ENCODE measurements at regions of chr6 and their contacts with region 1.

Region 1: DNA sequence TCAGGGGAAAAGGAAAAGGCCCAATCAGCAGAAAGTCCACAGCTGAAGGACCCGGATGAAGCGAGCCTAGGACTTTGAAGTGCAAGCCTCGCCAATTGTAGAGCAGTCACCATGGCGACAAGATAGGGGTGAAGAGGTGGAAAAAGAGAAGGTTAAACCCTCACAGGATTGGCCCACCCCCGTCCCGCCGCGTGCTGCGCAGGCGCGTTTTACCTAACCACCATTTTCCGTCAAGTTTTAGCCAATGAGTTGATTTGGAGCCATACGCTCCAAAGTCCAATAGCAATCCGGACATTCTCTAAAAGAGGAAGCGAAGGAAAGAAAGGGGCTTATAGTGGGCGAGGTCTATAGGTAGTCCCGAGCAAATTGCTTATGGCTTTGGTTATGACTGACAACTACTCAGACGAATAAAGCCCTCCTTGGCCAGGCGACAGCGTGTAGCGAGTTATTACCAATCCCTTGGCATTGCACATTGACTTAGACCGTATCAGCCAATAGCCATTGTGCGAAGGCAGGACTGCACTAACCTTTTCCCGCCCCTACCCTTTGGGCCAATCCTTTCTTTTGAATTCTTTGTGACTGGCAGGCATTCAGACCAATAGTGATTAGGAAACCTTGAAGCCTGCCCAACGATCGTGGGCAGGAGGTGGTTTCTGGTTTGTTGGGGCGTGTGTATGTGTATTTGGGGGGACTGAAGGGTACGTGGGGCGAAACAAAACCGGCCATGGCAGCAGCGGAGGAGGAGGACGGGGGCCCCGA is at the start of gene RNF5:
- DNase-seq: peak; percentile 91
- H3K4me3 Mint-ChIP-seq: peak within 1 kb of the TSS; percentile 95
- H3K27ac Mint-ChIP-seq: peak within 1 kb of the TSS; percentile 94
- H3K4me1 Mint-ChIP-seq: peaks cover 60% of the 10 kb centered on the region
- H3K27me3 Mint-ChIP-seq: no peaks in the 10 kb centered on the region
- total RNA-seq, gene RNF5: 58.1 and 60.4 TPM in 2 replicates

Region 2: GRCh38 chr6:31739639-31740396 is 438.1 kb before region 1 on chr6 and contains the start of gene MSH5:
- intact Hi-C with region 1: loop called (anchors 1 kb)
- DNase-seq: peak; percentile 97
- H3K4me3 Mint-ChIP-seq: peak within 1 kb of the TSS; percentile 98
- H3K27ac Mint-ChIP-seq: peak within 1 kb of the TSS; percentile 99
- H3K4me1 Mint-ChIP-seq: peaks cover 64% of the 10 kb centered on the region
- H3K27me3 Mint-ChIP-seq: peaks cover 3% of the 10 kb centered on the region
- total RNA-seq, gene MSH5: 80.5 and 83.4 TPM in 2 replicates

Region 3: DNA sequence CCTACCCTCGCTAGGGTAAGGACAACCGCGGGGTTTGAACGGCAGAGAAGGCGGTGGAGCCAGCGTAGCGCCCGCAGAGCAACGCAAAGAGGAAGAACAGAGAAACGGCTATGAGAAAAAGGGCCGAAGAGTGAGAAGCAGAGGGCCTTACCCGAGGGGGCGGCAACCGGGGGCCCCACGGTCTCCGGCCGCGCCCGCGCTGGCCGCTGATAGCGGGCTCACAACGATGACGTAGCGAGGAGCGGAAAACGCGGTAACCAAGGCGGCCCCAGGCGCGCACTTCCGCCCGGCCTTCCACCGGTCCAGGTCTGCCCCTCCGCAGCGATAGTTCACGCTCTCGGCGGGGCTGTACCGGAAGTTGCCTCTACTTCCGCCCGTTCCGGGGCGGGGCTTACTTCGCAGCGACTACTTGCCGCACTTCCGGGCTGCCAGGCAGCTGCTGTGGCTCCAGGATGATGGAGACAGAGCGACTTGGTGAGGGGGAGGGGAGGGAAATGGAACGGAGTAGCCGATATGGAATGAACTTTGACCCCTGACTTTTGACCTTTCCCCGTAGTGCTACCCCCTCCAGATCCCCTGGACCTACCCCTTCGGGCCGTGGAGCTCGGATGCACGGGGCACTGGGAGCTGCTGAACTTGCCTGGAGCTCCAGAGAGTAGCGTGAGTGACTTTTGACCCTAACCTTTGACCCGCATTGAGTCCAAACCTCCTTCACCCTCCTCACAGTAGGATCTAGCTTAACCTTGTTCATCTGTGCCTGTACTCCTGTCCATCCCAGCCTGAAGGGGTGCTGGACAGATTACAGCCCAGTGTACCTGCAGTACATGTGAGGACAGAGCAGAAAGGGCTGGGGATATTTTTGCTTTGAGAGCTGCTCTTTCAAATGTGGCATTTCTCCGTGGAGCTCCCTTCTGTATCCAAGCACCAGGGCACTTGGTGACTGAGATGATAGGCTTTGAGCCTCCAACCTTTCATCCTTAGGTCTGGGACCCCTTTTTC is 218.9 kb before region 1 on chr6 and contains the starts of genes NELFE and SKIC2:
- intact Hi-C with region 1: loop called (anchors 5 kb)
- DNase-seq: peak; percentile 99
- H3K4me3 Mint-ChIP-seq: peak within 1 kb of the TSS; percentile 98
- H3K27ac Mint-ChIP-seq: peak within 1 kb of the TSS; percentile 98
- H3K4me1 Mint-ChIP-seq: peaks cover 46% of the 10 kb centered on the region
- H3K27me3 Mint-ChIP-seq: no peaks in the 10 kb centered on the region
- total RNA-seq, gene NELFE: 92.3 and 97.7 TPM in 2 replicates
- total RNA-seq, gene SKIC2: 85.8 and 101 TPM in 2 replicates

Region 4: DNA sequence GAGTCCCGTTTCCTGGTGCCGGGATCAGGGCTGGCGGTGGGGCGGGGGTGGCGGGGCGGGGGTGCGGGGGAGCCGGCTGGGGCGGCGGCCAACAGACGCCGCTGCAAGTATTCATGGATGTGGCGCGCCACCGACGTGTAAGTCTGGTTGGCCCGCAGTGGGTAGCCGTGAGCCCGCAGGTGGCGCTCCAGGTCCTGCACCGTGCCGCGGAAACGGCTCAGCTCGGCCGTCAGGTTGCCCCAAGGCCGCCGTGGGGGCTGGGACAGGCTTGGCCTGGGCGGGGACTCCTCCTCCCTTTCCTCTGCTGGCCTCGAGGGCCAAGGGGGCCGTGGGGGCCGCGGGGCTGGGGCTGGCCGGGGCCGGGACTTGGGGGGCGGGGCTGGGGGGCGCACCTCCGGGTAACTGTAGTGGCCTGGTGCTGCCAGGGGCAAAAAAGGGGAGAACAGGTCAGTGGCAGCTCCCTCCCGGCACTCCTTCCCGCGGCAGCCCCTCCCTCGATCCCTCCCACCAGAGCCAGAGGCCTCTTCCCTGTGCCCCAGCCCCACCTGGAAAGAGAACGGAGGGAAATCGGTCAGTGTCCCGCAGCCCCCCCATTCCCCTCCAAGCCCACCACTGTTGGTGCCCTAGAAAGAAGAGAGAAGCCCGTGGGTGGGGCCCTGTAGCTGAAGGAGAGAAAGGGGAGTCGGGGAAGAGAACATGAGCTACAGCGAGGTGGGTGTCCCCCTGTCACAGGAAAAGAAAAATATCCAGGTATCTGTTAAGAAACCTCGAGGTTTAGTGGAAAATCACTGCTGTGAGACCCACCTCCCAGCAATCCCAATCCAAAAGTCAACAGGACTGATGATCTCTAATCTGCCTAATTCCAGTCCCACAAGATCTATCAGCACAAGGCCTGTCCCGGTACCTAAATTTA is 90.1 kb before region 1 on chr6:
- intact Hi-C with region 1: no loop called
- DNase-seq: peak; percentile 55
- H3K4me3 Mint-ChIP-seq: no peak overlapping the region
- H3K27ac Mint-ChIP-seq: no peak overlapping the region
- H3K4me1 Mint-ChIP-seq: peaks cover 11% of the 10 kb centered on the region
- H3K27me3 Mint-ChIP-seq: peaks cover 42% of the 10 kb centered on the region

Region 5: GRCh38 chr6:32148289-32149091 is 29.5 kb before region 1 on chr6:
- intact Hi-C with region 1: loop called (anchors 1 kb)
- DNase-seq: peak; percentile 67
- H3K4me3 Mint-ChIP-seq: peak overlapping the region; percentile 84
- H3K27ac Mint-ChIP-seq: peak overlapping the region; percentile 75
- H3K4me1 Mint-ChIP-seq: peaks cover 35% of the 10 kb centered on the region
- H3K27me3 Mint-ChIP-seq: peaks cover 56% of the 10 kb centered on the region

Region 6: DNA sequence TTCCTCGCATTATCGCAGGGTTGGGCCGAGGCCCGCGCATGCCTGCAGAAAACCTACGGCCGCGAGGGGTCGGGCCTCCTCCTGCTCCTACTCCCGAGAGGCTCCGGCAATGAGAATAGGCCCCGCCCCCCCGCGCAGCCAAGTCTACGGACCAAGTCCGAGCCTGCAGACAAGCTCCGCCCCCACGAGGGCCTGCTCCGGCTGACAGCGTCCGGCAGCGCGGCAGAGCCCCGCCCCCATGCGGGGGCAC is 17.6 kb after region 1 on chr6:
- intact Hi-C with region 1: loop called (anchors 1 kb)
- DNase-seq: peak; percentile 100
- H3K4me3 Mint-ChIP-seq: peak overlapping the region; percentile 97
- H3K27ac Mint-ChIP-seq: peak overlapping the region; percentile 98
- H3K4me1 Mint-ChIP-seq: peaks cover 48% of the 10 kb centered on the region
- H3K27me3 Mint-ChIP-seq: peaks cover 2% of the 10 kb centered on the region

Region 7: GRCh38 chr6:33417903-33418689 is 1240.1 kb after region 1 on chr6 and contains the start of gene CUTA:
- intact Hi-C with region 1: loop called (anchors 10 kb)
- DNase-seq: peak; percentile 98
- H3K4me3 Mint-ChIP-seq: peak within 1 kb of the TSS; percentile 95
- H3K27ac Mint-ChIP-seq: peak within 1 kb of the TSS; percentile 96
- H3K4me1 Mint-ChIP-seq: peaks cover 70% of the 10 kb centered on the region
- H3K27me3 Mint-ChIP-seq: no peaks in the 10 kb centered on the region
- total RNA-seq, gene CUTA: 131 and 137 TPM in 2 replicates